MCF 10A (cell line): ENCODE measurements at regions of chr7 and their contacts with region 1.

Region 1: DNA sequence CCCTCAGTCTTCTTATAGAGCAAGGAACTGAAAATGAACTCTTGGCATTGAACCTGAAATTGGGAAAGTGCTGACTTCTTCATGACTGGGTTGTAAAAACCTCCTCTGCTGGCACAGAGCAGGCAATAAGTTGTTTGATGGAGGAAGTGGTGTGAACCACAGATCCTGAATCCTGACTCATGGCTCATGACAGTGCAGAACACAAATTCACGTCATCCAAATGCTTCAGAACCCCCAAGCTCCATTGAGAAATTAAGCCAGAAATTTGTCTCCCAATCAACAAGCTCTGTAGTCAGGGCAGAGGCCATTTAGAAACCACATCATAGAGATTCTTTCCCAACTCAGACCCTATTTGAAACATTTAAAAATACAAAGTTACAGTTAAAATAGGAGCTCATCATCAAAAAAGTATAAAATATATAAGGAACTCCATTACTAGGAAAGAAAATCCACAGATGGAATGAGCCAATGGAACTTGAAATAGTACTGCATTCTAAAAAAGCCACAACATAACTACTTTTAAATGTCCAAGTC is 10.3 kb upstream of the STK17A start:
- DNase-seq: peak; percentile 99
- H3K4me3 Mint-ChIP-seq: no peak overlapping the region
- H3K27ac Mint-ChIP-seq: peak overlapping the region; percentile 58
- H3K4me1 Mint-ChIP-seq: peaks cover 35% of the 10 kb centered on the region
- H3K27me3 Mint-ChIP-seq: no peaks in the 10 kb centered on the region
- CTCF ChIP-seq: no peak

Region 2: GRCh38 chr7:43462836-43463235 is 109.7 kb before region 1 on chr7:
- CTCF ChIA-PET with region 1: interaction called, 3 read pairs
- POLR2A ChIA-PET with region 1: interaction called, 13 read pairs
- intact Hi-C with region 1: no loop called
- DNase-seq: peak; percentile 68
- H3K4me3 Mint-ChIP-seq: peak overlapping the region; percentile 53
- H3K27ac Mint-ChIP-seq: peak overlapping the region; percentile 76
- H3K4me1 Mint-ChIP-seq: peaks cover 39% of the 10 kb centered on the region
- H3K27me3 Mint-ChIP-seq: no peaks in the 10 kb centered on the region
- CTCF ChIP-seq: no peak

Region 3: GRCh38 chr7:43516581-43517342 is 55.8 kb before region 1 on chr7:
- CTCF ChIA-PET with region 1: interaction called, 9 read pairs
- POLR2A ChIA-PET with region 1: interaction called, 18 read pairs
- intact Hi-C with region 1: no loop called
- DNase-seq: peak; percentile 74
- H3K4me3 Mint-ChIP-seq: no peak overlapping the region
- H3K27ac Mint-ChIP-seq: no peak overlapping the region
- H3K4me1 Mint-ChIP-seq: peaks cover 5% of the 10 kb centered on the region
- H3K27me3 Mint-ChIP-seq: no peaks in the 10 kb centered on the region
- CTCF ChIP-seq: no peak